GM12878 (cell line): ENCODE measurements at regions of chr1 and their contacts with region 1.

Region 1: DNA sequence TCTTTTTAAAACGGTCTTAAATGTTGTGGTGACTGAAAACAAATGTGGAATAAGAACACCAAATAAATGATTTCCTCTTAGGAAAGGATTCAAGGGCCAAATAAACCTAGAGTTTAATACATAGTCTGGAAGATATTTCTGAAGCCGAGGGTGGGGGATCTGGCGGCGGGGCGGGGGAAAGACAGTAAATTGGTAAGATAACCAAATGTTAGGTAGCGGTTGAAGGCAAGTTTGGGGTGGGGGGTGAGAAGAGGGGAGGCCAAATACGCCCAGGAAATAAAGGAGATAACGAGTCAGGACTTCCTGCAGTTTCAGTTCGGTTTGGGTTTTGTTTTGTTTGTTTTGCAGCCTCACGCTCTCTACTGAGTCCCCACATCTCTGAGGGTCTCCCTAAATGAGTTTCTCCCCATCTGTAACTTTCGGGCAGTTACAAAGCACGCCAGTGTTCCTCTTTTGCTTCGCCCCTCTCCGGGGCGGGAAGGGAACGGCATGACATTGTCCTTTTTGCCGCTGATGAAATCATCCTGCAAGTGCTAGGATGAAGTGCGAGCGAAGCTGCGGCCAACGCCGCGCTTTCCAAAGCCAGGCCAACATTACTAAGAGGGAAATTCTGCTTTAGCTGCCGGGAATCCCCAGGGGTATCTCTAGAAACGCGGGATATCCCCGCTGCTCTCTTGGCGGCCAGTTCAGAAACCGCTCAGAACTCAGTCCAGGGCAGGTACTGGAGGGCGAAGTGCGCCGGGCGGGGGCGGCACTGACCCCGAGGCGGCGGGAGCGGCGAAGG is 844 bp downstream of the NIBAN1 start:
- DNase-seq: peak; percentile 56
- ATAC-seq: peak; percentile 78
- H3K4me3 ChIP-seq: peak overlapping the region; percentile 96
- H3K27ac ChIP-seq: peak overlapping the region; percentile 86
- H3K4me1 ChIP-seq: peaks cover 21% of the 10 kb centered on the region
- H3K27me3 ChIP-seq: no peaks in the 10 kb centered on the region
- CTCF ChIP-seq: no peak
- EP300 ChIP-seq: peak; percentile 36 to 40; a peak in 3 of 4 replicates
- POLR2A ChIP-seq: no peak
- RAD21 ChIP-seq: 0 out of 2 replicates have a peak, but pooled peaks have one; percentile 16

Region 2: DNA sequence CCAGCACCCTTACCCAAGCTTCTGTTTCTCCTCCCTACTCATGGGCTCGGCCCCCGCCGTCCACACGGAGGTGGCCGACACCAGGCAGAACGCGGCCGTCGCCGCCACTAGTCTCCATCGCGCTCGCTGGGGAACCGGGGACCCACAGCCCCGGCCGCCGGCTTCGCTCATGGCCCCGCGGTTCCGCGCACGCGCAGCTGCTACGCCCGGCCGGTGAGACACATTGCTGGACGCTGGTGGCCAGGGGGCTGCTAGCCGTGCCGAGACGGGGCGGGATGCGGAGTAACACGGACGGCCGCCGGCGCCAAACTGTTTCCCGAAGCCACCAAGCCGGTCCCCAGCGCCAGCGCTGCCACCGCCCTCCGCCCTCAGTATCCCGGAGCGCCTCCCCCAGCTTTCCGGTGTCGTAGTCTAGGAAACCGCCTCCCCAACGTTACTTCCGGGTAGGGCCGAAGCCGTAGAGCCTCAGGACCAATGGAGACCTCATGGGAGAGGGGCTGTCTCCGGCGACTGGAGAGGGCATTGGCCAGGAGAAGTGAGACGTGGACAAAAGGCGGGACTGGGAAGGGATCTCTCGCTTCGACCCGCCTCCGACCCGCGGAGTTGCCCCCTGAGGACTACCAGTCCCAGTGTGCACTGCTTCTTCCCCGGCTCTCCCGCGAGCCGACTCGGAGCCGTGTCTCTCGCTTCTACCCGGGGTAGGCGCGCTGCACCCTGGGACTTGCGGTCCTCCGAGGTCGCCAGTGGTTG is 218.8 kb before region 1 on chr1 and contains the start of gene EDEM3:
- CTCF ChIA-PET with region 1: no interaction called
- POLR2A ChIA-PET with region 1: interaction called, 4 read pairs
- RAD21 ChIA-PET with region 1: interaction called, 3 read pairs
- SMC1A ChIA-PET with region 1: interaction called, 4 read pairs
- in situ Hi-C with region 1: no loop called
- intact Hi-C with region 1: loop called (anchors 5 kb)
- DNase-seq: peak; percentile 97
- ATAC-seq: peak; percentile 95
- H3K4me3 ChIP-seq: peak within 1 kb of the TSS; percentile 82
- H3K27ac ChIP-seq: peak within 1 kb of the TSS; percentile 87
- H3K4me1 ChIP-seq: no peaks in the 10 kb centered on the region
- H3K27me3 ChIP-seq: no peaks in the 10 kb centered on the region
- CTCF ChIP-seq: no peak
- EP300 ChIP-seq: no peak
- POLR2A ChIP-seq: peak; percentile 95
- RAD21 ChIP-seq: no peak
- polyA plus RNA-seq, gene EDEM3: 6.4 to 9.2 TPM

Region 3: DNA sequence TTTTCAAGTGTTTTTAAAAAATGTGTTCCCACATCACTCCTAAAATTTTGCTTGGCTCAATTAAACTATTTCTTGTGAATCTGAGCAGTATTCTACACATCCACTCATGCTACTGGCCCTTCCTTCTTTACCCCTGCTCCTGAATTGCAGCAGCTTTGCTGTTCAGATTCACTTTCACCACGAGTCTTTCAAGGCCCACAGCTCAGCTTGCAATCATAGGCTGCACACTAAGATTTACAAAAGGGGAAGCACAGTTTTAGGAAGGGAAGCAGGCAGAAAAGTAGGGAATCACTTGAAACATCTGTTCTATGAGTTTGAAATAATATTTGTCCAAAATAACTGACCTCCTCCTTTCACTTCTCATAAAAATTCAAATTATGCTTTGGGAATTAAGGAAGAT is 147.9 kb before region 1 on chr1:
- CTCF ChIA-PET with region 1: interaction called, 4 read pairs
- POLR2A ChIA-PET with region 1: no interaction called
- RAD21 ChIA-PET with region 1: interaction called, 3 read pairs
- SMC1A ChIA-PET with region 1: no interaction called
- in situ Hi-C with region 1: no loop called
- intact Hi-C with region 1: loop called (anchors 2 kb)
- DNase-seq: no peak
- ATAC-seq: peak; percentile 68
- H3K4me3 ChIP-seq: no peak overlapping the region
- H3K27ac ChIP-seq: peak overlapping the region; percentile 60
- H3K4me1 ChIP-seq: peaks cover 20% of the 10 kb centered on the region
- H3K27me3 ChIP-seq: no peaks in the 10 kb centered on the region
- CTCF ChIP-seq: no peak
- EP300 ChIP-seq: no peak
- POLR2A ChIP-seq: no peak
- RAD21 ChIP-seq: no peak

Region 4: GRCh38 chr1:184866991-184867788 is 106.3 kb before region 1 on chr1:
- CTCF ChIA-PET with region 1: interaction called, 3 read pairs
- POLR2A ChIA-PET with region 1: no interaction called
- RAD21 ChIA-PET with region 1: interaction called, 3 read pairs
- SMC1A ChIA-PET with region 1: interaction called, 29 read pairs
- in situ Hi-C with region 1: no loop called
- intact Hi-C with region 1: loop called (anchors 2 kb)
- DNase-seq: peak; percentile 79
- ATAC-seq: peak; percentile 94
- H3K4me3 ChIP-seq: 0 out of 2 replicates have a peak overlapping the region, but pooled peaks have one; percentile 11
- H3K27ac ChIP-seq: peak overlapping the region; percentile 87
- H3K4me1 ChIP-seq: peaks cover 30% of the 10 kb centered on the region
- H3K27me3 ChIP-seq: no peaks in the 10 kb centered on the region
- CTCF ChIP-seq: no peak
- EP300 ChIP-seq: peak; percentile 84 to 87
- POLR2A ChIP-seq: no peak
- RAD21 ChIP-seq: no peak

Region 5: GRCh38 chr1:184892116-184892515 is 81.3 kb before region 1 on chr1:
- CTCF ChIA-PET with region 1: interaction called, 3 read pairs
- POLR2A ChIA-PET with region 1: no interaction called
- RAD21 ChIA-PET with region 1: interaction called, 5 read pairs
- SMC1A ChIA-PET with region 1: interaction called, 14 read pairs
- in situ Hi-C with region 1: no loop called
- intact Hi-C with region 1: loop called (anchors 5 kb)
- DNase-seq: no peak
- ATAC-seq: peak; percentile 94
- H3K4me3 ChIP-seq: no peak overlapping the region
- H3K27ac ChIP-seq: no peak overlapping the region
- H3K4me1 ChIP-seq: peaks cover 12% of the 10 kb centered on the region
- H3K27me3 ChIP-seq: no peaks in the 10 kb centered on the region
- CTCF ChIP-seq: no peak
- EP300 ChIP-seq: no peak
- POLR2A ChIP-seq: no peak
- RAD21 ChIP-seq: no peak

Region 6: DNA sequence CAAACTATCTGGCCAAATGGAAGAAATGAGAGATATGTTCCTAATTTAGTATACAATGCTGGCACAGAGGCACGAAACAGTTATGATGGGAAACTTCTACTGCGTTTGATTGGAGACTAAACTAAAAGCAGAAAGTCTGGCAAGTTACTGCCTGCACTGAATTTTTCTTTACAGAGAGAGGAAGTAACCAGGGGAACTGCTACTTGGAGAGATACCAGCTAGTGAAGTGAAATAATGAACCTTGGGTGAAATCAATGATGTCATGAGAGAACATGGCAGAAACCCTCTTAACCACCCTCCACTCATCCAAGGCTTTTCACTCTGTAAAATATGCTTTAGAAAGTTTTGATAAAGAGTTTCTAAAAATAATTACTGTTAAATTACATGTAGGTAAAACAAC is 28.4 kb before region 1 on chr1:
- CTCF ChIA-PET with region 1: interaction called, 4 read pairs
- POLR2A ChIA-PET with region 1: interaction called, 10 read pairs
- RAD21 ChIA-PET with region 1: interaction called, 8 read pairs
- SMC1A ChIA-PET with region 1: interaction called, 29 read pairs
- in situ Hi-C with region 1: no loop called
- intact Hi-C with region 1: loop called (anchors 1 kb)
- DNase-seq: peak; percentile 51
- ATAC-seq: peak; percentile 87
- H3K4me3 ChIP-seq: no peak overlapping the region
- H3K27ac ChIP-seq: peak overlapping the region; percentile 46
- H3K4me1 ChIP-seq: peaks cover 28% of the 10 kb centered on the region
- H3K27me3 ChIP-seq: no peaks in the 10 kb centered on the region
- CTCF ChIP-seq: no peak
- EP300 ChIP-seq: 0 out of 4 replicates have a peak, but pooled peaks of 1 of the 2 experiments have one; percentile 10
- POLR2A ChIP-seq: no peak
- RAD21 ChIP-seq: no peak

Region 7: GRCh38 chr1:184954231-184954995 is 19.1 kb before region 1 on chr1:
- CTCF ChIA-PET with region 1: interaction called, 7 read pairs
- POLR2A ChIA-PET with region 1: no interaction called
- RAD21 ChIA-PET with region 1: interaction called, 5 read pairs
- SMC1A ChIA-PET with region 1: interaction called, 32 read pairs
- in situ Hi-C with region 1: no loop called
- intact Hi-C with region 1: no loop called
- DNase-seq: no peak
- ATAC-seq: no peak
- H3K4me3 ChIP-seq: no peak overlapping the region
- H3K27ac ChIP-seq: no peak overlapping the region
- H3K4me1 ChIP-seq: no peaks in the 10 kb centered on the region
- H3K27me3 ChIP-seq: no peaks in the 10 kb centered on the region
- CTCF ChIP-seq: no peak
- EP300 ChIP-seq: no peak
- POLR2A ChIP-seq: no peak
- RAD21 ChIP-seq: no peak